OCI-LY7 (cell line): ENCODE measurements at regions of chr11 and their contacts with region 1.

Region 1: GRCh38 chr11:809287-810039 is at the start of gene RPLP2:
- DNase-seq: peak; percentile 99
- H3K4me3 ChIP-seq: peak within 1 kb of the TSS; percentile 100
- H3K27ac ChIP-seq: peak within 1 kb of the TSS; percentile 84
- H3K4me1 ChIP-seq: peaks cover 56% of the 10 kb centered on the region
- CTCF ChIP-seq: no peak
- total RNA-seq, gene RPLP2: 1,564 and 1,687 TPM in 2 replicates

Region 2: GRCh38 chr11:842370-843002 is 33.0 kb after region 1 on chr11 and contains the starts of genes POLR2L and TSPAN4:
- CTCF ChIA-PET with region 1: interaction called, 4 read pairs
- POLR2A ChIA-PET with region 1: interaction called, 6 read pairs
- intact Hi-C with region 1: loop called (anchors 2 kb)
- DNase-seq: peak; percentile 95
- H3K4me3 ChIP-seq: peak within 1 kb of the TSS; percentile 89
- H3K27ac ChIP-seq: peak within 1 kb of the TSS; percentile 54
- H3K4me1 ChIP-seq: peaks cover 26% of the 10 kb centered on the region
- CTCF ChIP-seq: no peak
- total RNA-seq, gene POLR2L: 206 and 224 TPM in 2 replicates
- total RNA-seq, gene TSPAN4: 8.9 and 12.1 TPM in 2 replicates

Region 3: DNA sequence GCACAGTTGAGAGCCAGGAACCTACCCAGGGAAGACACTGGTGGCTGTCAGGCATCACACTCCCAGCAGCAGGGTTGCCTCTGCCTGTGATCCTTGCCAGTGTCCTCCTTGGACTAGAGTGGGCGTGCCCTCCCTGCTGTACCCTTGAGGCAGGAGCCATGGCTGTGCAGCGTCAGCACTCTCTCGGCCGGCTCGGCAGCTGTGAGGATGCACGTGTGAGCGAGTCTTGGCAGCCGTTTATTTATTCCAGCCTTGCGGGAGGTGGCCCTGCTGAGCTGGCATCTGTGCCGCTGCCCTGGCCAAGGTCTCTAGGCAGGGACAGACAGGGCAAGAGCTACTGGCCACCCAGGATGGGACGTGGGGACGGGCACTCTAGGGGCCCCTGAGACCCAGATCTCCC is 67.1 kb after region 1 on chr11:
- CTCF ChIA-PET with region 1: no interaction called
- POLR2A ChIA-PET with region 1: no interaction called
- intact Hi-C with region 1: no loop called
- DNase-seq: no peak
- H3K4me3 ChIP-seq: no peak overlapping the region
- H3K27ac ChIP-seq: no peak overlapping the region
- H3K4me1 ChIP-seq: no peaks in the 10 kb centered on the region
- CTCF ChIP-seq: no peak

Region 4: GRCh38 chr11:952406-953385 is 143.2 kb after region 1 on chr11:
- CTCF ChIA-PET with region 1: no interaction called
- POLR2A ChIA-PET with region 1: no interaction called
- intact Hi-C with region 1: no loop called
- DNase-seq: no peak
- H3K4me3 ChIP-seq: no peak overlapping the region
- H3K27ac ChIP-seq: no peak overlapping the region
- H3K4me1 ChIP-seq: no peaks in the 10 kb centered on the region
- CTCF ChIP-seq: no peak